ENCODE measurements at regions of chrX and their contacts with region 1.

Region 1: GRCh38 chrX:14043209-14043608 is 13.5 kb upstream of the GEMIN8 start:
- DNase-seq: no peak
- ATAC-seq: no peak

Region 2: GRCh38 chrX:15143050-15143824 is 1100.0 kb after region 1 on chrX:
- intact Hi-C with region 1: loop called (anchors 5 kb)
- DNase-seq: no peak
- ATAC-seq: no peak

Region 3: DNA sequence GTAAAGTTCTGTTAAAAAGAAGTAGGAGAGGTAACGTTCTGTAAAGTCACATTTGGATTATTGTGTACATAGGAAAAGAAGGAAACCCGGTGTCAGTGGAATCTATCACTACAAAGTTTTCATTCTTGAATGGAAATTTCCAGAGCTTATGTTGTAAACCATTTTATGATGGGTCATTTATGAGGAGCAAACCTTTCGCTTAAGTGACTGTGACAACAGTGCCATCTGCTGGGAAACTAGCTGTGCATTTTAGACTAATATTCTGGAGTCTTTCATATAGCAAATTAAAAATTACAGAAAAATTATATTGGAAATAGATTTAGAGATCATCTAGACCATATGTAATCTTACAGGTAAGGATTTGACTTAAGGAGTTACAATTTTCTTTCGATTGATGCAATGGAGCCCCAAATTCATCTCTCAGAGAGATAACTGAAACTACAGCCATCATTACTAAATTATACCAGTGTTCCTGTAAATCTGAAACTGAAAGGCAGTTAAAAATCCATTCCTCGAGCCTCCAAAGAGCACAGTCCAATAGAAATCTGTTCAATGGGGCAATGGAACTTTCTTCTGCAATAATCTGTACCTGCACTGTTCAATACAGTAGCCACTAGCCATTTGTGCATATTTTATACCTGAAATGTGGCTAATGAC is 1199.8 kb after region 1 on chrX:
- intact Hi-C with region 1: loop called (anchors 5 kb)
- DNase-seq: no peak
- ATAC-seq: no peak

Measured in Right ventricle myocardium inferior (tissue), 1 donor.